ENCODE measurements at regions of chr15 and their contacts with region 1.

Region 1: DNA sequence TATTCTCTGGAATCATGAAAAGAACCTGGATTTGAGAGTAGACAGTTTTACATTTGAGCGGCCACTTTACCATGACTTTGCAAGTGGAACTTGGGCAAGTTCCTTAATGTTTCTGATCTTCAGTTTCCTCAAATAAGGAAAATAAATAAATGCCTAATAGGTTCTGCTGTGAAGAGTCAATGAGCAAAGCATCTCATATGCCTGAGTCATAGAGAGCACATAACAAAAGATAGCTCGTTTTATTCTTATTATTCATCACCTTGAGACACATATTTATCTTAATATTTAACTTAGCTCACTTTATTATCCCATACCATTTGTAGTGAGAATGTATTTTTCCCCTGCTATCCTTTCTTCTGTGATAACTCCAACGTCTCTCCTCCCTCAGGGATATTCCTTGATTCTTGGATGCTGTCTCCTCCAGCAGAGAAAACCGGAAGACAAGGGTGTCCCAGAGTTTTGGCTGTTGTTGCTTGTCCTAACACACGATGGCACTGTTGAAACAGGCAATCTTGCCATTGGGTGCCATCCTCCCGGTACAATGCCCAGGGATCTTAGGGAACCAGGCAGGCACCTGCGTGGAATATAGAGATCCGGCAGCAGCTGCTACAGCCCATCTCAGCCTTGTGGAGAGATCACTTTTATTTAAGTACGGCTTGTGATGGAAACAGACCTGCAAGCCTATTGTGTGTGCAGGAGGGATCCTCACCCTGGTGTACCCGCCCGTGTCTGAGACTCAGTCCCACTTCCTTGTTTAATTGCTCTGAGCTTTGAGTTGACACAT is 33.3 kb upstream of the VPS33B start:
- DNase-seq: peak; percentile 74
- ATAC-seq: peak; percentile 98
- H3K4me3 Mint-ChIP-seq: peak overlapping the region; percentile 16; the same call in 1 of the 2 replicates
- H3K27ac Mint-ChIP-seq: no peak overlapping the region
- H3K4me1 Mint-ChIP-seq: peaks cover 2% of the 10 kb centered on the region; the same call in 1 of the 2 replicates
- H3K27me3 Mint-ChIP-seq: peaks cover 8% of the 10 kb centered on the region
- CTCF ChIP-seq: peak; percentile 46; the same call in 1 of the 2 replicates

Region 2: DNA sequence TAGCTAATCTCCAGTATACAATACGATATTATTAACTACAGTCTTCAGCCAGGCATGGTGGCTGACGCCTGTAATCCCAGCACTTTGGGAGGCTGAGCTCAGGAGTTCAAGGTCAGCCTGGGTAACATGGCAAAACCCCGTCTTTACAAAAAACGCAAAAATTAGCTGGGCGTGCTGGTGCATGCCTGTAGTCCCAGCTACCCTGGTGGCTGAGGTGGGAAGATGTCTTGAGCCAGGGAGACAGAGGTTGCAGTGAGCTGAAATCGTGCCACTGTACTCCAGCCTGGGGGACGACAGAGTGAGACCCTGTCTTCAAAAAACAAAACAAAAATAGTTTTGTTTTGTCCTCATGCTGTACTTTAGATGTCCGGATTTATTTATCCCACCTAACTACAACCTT is 15.1 kb after region 1 on chr15:
- CTCF ChIA-PET with region 1: interaction called, 12 read pairs
- POLR2A ChIA-PET with region 1: no interaction called
- DNase-seq: no peak
- ATAC-seq: peak; percentile 60
- H3K4me3 Mint-ChIP-seq: no peak overlapping the region
- H3K27ac Mint-ChIP-seq: no peak overlapping the region
- H3K4me1 Mint-ChIP-seq: no peaks in the 10 kb centered on the region
- H3K27me3 Mint-ChIP-seq: no peaks in the 10 kb centered on the region; the same call in 1 of the 2 replicates
- CTCF ChIP-seq: no peak

Region 3: GRCh38 chr15:91214675-91215590 is 159.2 kb after region 1 on chr15:
- CTCF ChIA-PET with region 1: interaction called, 15 read pairs
- POLR2A ChIA-PET with region 1: no interaction called
- DNase-seq: peak; percentile 30
- ATAC-seq: peak; percentile 86
- H3K4me3 Mint-ChIP-seq: no peak overlapping the region
- H3K27ac Mint-ChIP-seq: peak overlapping the region; percentile 63
- H3K4me1 Mint-ChIP-seq: peaks cover 15% of the 10 kb centered on the region
- H3K27me3 Mint-ChIP-seq: no peaks in the 10 kb centered on the region
- CTCF ChIP-seq: no peak

Region 4: GRCh38 chr15:91246998-91247397 is 191.3 kb after region 1 on chr15:
- CTCF ChIA-PET with region 1: interaction called, 26 read pairs
- POLR2A ChIA-PET with region 1: no interaction called
- DNase-seq: no peak
- ATAC-seq: no peak
- H3K4me3 Mint-ChIP-seq: no peak overlapping the region
- H3K27ac Mint-ChIP-seq: no peak overlapping the region
- H3K4me1 Mint-ChIP-seq: peaks cover 4% of the 10 kb centered on the region; the same call in 1 of the 2 replicates
- H3K27me3 Mint-ChIP-seq: peaks cover 4% of the 10 kb centered on the region; the same call in 1 of the 2 replicates
- CTCF ChIP-seq: no peak

Region 5: GRCh38 chr15:91271565-91272153 is 215.9 kb after region 1 on chr15:
- CTCF ChIA-PET with region 1: interaction called, 41 read pairs
- POLR2A ChIA-PET with region 1: no interaction called
- DNase-seq: peak; percentile 64
- ATAC-seq: peak; percentile 67; the same call in 1 of the 2 replicates
- H3K4me3 Mint-ChIP-seq: no peak overlapping the region
- H3K27ac Mint-ChIP-seq: no peak overlapping the region
- H3K4me1 Mint-ChIP-seq: no peaks in the 10 kb centered on the region
- H3K27me3 Mint-ChIP-seq: peaks cover 13% of the 10 kb centered on the region
- CTCF ChIP-seq: peak; percentile 69